Activated T-helper 2 cell treated with anti-CD3 and anti-CD28 coated beads, Interferon-gamma antibody, Interleukin-2, Interleukin-4, amounts not matched to agents 10 μg/mL and 5 μg/mL and 100 μg/mL, durations not matched to agents 14 hours and 24 hours and 36 hours (primary cell): ENCODE measurements at regions of chr16 and their contacts with region 1.

Region 1: DNA sequence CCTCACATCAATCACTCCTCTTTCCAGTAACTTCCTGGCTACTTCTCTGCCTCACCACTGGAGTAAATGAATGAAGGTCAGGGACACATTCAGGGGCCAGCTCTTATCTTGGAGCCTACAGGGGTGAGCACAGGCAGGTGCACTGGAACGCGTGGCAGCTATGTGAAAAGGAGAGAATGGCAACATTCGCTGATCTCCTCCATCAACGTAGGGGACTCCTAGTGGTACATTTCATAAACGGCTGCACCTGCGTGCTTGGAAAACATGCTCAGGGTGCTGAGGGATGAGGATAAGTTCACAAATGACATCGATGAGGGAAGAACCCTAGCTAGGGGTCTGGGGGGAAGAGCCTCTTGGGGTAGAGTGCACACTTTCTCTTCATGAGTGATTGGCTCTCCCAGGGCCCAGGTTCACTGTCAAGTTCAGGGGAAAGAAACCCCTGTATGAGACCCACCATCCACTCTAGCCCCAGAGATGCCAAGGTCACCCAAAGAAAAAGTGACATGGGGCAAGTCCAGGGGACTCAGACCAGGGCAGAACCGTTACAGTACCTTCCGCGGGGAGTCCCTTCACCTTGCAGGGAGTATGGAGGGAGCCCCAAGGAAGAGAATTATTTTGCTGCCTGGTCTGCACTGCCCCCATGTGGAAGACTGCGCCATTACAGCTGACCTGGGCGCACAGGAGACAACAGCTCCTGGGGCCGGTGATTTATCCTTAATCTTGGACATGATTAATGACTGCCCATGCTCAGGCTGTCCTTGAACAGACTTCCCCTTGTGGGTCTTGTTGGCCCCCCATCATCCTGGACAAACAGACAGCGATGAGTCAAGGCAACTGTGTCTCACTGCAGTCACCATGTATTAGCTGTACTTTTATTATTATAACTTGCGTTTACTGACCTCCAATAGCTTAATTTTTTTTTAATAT is 30.1 kb downstream of the VAC14 start:
- DNase-seq: peak; percentile 48
- H3K4me3 Mint-ChIP-seq: no peak overlapping the region
- H3K27ac Mint-ChIP-seq: no peak overlapping the region
- H3K4me1 Mint-ChIP-seq: peaks cover 2% of the 10 kb centered on the region
- H3K27me3 Mint-ChIP-seq: no peaks in the 10 kb centered on the region

Region 2: DNA sequence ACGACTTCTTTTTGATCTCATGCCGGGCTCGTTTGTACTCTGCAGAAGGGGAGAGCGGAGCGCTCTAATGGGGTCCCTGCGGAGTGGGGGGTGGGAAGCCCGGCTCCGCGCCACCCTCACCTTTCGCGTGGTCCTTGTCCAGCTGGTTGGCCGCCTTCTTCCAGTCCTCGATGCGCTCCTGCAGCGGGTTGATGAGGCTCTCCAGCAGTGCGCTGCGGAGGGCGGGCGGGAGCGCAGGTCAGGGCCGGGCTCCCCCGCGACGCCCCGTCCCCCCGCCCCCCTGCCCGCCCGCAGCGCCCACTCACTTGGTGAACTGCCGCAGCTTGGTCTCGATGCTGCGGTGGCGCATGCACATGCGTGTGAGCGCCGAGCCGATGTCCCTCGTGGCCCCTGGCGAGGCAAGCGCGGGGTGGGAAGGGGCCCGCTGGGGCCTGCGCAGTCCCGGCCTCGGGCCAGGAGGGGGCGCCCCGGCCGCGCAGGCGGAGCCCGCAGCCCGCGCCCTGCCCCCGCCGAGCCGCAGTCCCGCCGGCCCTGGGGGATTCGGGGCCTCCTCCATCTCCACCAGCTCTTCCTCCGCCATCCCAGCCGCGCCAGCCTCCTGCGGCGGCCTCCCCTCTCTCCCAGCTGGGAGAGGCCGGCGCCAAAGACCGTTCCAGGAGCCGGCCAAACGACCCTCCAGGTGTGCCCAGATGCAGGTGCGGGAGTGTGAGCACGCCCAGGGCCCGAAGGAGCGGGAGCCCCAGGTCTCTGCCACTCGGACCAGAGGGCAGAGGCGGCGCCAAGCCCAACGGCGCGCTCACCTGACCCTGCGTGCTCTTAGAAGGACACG is 91.0 kb before region 1 on chr16:
- intact Hi-C with region 1: loop called (anchors 1 kb)
- DNase-seq: no peak
- H3K4me3 Mint-ChIP-seq: no peak overlapping the region
- H3K27ac Mint-ChIP-seq: no peak overlapping the region
- H3K4me1 Mint-ChIP-seq: peaks cover 1% of the 10 kb centered on the region
- H3K27me3 Mint-ChIP-seq: peaks cover 9% of the 10 kb centered on the region

Region 3: DNA sequence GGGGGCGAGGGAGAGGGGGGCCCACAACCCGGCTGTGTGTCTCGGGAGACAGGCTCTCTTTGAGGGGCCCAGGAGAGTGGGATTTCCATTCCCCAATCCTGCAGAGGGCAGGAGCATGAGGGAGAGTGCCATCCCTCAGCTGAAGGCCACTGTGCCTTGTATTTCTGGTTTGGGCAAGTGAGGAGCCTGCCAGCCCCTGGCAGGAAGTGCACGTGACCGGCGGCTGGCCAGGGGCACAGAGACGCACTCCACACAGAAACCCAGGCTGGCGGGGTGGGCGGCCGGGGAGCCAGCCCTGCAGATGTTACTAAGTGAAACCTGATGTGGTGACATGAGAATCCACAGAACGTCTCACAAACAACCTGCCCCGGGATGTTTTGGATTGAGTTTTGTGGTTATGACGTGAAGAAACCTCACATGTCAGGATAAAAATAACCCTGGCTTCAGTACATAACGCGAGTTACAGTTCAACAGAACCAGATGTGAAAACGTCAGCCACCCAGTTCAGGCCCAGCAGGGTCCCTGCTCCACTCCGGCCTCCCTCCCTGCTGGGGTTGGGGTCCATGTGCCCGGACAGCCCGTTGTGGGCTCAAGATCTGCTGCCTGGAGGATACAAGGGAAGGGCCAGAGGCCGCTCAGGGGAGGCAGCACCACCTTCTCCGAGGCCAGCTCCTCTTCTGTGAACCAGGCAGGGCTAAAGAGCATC is 33.4 kb before region 1 on chr16:
- intact Hi-C with region 1: loop called (anchors 1 kb)
- DNase-seq: peak; percentile 78
- H3K4me3 Mint-ChIP-seq: peak overlapping the region; percentile 62
- H3K27ac Mint-ChIP-seq: peak overlapping the region; percentile 96
- H3K4me1 Mint-ChIP-seq: peaks cover 46% of the 10 kb centered on the region
- H3K27me3 Mint-ChIP-seq: no peaks in the 10 kb centered on the region